ENCODE measurements at regions of chr6 and their contacts with region 1.

Region 1: DNA sequence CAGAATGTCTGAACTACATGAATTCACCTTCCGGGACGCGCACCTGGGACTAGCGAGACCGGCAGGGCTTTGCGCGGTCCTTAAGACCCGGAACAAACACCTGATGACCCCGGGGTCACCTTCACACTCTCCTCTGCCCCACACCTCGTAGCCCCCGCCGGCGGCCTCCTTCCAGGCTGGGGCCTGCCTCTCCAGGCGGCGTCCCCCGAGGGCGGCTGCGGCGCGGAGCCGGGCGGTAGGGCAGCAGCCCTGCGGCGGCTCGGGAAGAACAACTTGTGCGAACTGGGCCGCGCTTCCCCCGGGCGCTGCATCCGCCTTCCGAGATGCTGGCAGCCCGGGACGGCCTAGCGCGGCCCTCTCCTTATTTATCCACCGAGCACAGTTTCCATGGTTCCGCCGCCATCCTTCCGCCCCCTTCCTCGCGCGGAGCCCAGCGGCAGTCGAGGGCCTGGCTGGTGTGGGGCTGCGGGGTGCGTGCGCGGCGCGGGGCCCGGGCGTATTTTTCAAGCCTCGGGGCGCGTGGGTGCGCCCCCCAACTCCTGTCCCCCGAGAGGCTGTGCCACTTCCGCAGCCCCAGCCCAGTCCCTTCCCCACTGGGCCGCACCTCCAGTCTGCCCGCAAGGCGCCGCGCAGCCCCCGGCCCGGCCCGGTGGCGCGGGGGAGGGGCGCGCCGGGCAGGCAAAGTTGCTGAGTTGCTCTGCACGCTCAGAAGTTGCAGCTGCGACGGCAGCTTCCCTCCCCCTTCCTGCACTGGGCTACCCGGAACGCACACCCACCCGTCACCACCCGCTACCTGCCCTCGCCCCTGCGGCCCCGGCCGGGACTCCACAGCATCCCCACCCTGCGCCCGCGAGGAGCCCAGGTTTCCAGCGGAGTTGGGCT is 56.3 kb upstream of the RREB1 start:
- DNase-seq: peak; percentile 62 to 79 (median 72)
- H3K4me3 ChIP-seq: peak overlapping the region; percentile 52 to 77 (median 70)
- H3K27ac ChIP-seq: peak overlapping the region; percentile 79 to 95 (median 90)
- H3K4me1 ChIP-seq: peaks cover 22 to 24% of the 10 kb centered on the region in 2 donors
- H3K27me3 ChIP-seq: no peaks in the 10 kb centered on the region
- CTCF ChIP-seq: no peak
- POLR2A ChIP-seq: peak in 1 of 2 donors; percentile 64

Region 2: DNA sequence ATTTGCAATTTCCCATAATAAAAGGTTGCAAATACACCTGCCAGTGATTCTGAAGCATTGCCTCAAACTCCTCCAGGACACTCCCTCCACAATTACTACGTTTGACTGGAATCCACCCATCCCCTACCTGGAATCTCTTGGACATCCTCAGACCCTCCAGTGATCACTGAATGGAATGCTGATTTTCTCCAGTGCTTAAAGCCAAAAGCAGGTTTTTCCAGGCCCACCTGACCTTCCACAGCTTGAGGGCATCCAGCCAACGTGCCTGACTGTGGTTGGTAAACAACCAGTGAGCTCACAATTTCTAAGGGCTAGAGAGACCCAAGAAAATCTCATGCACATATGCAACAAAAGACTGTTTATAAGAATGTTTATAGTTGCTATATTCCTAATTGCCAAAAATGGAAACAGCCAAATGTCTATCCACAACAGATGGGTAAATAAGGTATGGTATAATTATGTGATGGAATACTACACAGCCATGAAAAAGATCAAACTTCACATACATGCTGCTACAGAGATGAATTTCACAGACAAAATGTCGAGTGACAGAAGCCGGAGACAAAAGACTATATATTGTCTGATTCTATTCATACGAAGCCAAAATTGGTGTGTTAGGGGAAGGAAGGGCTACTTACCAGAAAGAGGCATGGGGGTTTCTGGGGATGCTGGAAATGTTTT is 90.8 kb before region 1 on chr6:
- intact Hi-C with region 1: no loop called
- DNase-seq: no peak
- H3K4me3 ChIP-seq: no peak overlapping the region
- H3K27ac ChIP-seq: no peak overlapping the region
- H3K4me1 ChIP-seq: peaks cover 0 to 6% of the 10 kb centered on the region in 2 donors
- H3K27me3 ChIP-seq: no peaks in the 10 kb centered on the region
- CTCF ChIP-seq: no peak
- POLR2A ChIP-seq: no peak

Region 3: DNA sequence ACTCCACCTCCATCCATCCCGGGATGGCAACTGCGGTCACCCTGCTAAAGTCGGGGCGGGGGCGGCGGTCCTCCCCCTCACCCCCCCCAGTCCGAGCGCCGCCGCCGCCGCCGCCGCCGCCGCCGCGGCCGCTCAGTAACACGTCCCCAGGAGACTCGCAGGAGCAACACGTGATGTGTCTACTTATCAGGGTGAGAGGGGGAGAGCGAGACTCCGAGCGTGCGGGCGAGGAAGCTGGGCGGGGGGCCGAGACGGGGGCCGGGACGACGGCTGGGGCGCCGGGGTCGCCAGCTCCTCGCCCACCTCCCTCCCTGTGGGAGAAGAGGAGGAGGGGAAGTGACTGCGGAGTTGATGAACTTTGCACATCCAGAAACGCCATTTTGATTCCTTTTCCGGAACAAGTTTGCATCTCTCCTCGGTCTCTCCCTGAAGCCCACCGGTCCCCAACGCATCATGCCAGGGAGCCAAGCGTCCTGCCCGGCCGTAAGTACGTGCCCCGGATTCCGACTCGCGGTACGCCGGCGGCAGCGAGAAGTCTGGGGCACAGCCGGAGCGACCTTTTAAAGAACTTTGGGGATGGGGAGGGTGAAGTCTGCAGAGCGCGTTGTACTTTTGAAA is 56.2 kb after region 1 on chr6 and contains the start of gene RREB1:
- intact Hi-C with region 1: loop called in 1 of 2 experiments (anchors 10 kb)
- DNase-seq: peak; percentile 59 to 80 (median 68)
- H3K4me3 ChIP-seq: peak within 1 kb of the TSS; percentile 66 to 87 (median 84)
- H3K27ac ChIP-seq: peak within 1 kb of the TSS; percentile 77 to 97 (median 89)
- H3K4me1 ChIP-seq: peaks cover 5 to 32% of the 10 kb centered on the region in 2 donors
- H3K27me3 ChIP-seq: no peaks in the 10 kb centered on the region
- CTCF ChIP-seq: no peak
- POLR2A ChIP-seq: peak in 1 of 2 donors; percentile 61
- total RNA-seq, gene RREB1: 14.8 to 79.5 (median 54.3) TPM

Region 4: GRCh38 chr6:7219310-7219709 is 167.8 kb after region 1 on chr6:
- intact Hi-C with region 1: no loop called
- DNase-seq: peak in 6 of 7 donors; percentile 68 to 81 (median 77)
- H3K4me3 ChIP-seq: no peak overlapping the region
- H3K27ac ChIP-seq: peak overlapping the region; percentile 67 to 85 (median 74)
- H3K4me1 ChIP-seq: peaks cover 71 to 82% of the 10 kb centered on the region in 2 donors
- H3K27me3 ChIP-seq: no peaks in the 10 kb centered on the region
- CTCF ChIP-seq: no peak
- POLR2A ChIP-seq: no peak